Right ventricle myocardium superior (tissue), 1 donor: ENCODE measurements at regions of chr22 and their contacts with region 1.

Region 1: DNA sequence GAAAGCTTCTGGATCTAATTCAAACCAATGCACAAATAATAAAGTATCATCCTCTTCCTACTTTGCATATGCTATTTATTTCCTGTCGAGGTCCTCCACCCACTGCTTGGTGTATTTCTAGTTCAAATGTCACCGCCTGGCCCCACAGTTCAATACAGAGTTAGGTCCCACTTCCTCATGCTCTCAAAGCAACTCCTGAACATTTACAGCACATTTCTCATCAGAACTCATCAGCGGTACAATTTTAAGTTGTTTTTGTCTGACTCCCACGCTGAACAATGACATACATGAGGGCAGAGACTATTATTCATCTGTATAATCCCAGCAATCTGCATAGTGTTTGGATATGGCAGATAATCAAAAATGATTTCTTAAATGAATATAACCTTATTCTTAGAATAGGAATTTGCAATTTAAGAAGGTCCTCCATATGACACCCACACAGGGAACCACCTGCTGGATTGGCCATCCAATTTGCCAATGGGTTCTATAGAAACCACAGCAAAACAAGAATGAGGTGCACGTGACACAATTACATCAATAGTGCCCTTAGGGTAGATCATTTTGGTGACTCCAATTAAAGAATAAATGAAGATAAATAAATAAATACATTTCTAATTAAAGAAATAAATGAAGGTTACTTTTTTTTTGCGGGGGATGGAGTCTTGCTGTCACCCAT is 54.2 kb downstream of the SLC25A17 start:
- DNase-seq: no peak
- ATAC-seq: no peak

Region 2: DNA sequence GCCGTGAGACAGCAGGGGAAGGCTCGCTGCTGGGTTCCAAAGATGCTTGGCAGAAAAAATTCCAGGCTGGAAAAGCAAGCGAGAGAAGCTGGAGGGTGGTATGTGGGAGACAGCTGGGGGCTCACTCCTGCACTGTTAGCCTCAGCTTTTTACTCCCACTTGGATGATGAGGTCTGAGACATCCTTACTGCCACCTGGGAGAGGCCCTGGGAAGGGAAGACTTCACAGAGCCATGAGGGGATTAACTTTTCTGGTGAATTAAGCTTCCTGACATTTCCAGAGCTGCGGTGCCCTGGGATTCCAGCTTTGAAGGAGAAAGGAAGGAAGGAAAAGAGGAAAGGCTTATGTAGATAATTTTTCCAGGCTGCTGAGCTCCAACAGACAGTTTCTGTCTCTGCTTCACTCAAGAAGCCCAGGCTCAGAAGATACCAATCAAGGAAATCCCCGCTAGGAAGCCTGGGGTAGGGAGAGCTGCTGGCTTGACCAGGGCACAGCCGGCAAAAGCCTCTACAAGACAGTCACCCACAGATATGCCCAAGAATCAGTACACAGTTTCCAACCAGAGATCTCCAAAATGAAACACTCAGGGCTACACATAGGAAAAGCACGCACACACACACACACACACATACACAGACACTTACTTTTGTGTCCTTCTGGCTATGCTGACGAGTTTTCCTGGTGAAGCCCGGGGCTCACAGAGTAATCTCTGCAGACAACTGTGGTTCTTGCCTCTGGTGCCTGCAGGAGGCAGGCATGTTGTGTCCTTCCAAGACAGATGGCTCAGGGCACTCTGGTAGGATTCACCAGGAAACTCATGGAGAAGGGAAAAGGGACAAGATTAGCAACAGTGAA is 84.7 kb before region 1 on chr22:
- intact Hi-C with region 1: loop called (anchors 5 kb)
- DNase-seq: no peak
- ATAC-seq: no peak

Region 3: DNA sequence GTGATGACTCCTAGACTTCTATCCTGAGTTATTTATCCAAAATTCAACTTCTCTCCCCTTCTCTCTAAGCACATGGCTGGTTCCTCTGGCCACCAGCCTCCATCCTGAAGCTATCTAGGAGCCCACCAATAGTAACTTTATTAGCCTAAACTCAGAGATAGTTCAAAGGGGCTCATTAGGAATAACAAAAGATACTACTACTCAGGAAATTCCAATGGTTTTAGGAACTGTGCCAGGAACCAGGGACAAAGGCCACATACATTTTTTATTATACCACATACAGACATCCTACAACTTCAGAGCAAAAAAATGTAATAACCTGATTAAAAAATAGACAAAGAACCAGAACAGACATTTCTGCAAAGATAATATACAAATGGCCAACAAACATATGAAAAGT is 26.3 kb after region 1 on chr22:
- intact Hi-C with region 1: no loop called
- DNase-seq: no peak
- ATAC-seq: no peak